ENCODE measurements at regions of chr19 and their contacts with region 1.

Region 1: GRCh38 chr19:46704379-46705076 is 12.4 kb downstream of the PRKD2 start:
- DNase-seq: peak; percentile 64
- H3K4me3 ChIP-seq: no peak overlapping the region
- H3K27ac ChIP-seq: no peak overlapping the region
- H3K4me1 ChIP-seq: no peaks in the 10 kb centered on the region
- H3K27me3 ChIP-seq: no peaks in the 10 kb centered on the region
- CTCF ChIP-seq: peak; percentile 95 to 98
- POLR2A ChIP-seq: peak; percentile 26

Region 2: DNA sequence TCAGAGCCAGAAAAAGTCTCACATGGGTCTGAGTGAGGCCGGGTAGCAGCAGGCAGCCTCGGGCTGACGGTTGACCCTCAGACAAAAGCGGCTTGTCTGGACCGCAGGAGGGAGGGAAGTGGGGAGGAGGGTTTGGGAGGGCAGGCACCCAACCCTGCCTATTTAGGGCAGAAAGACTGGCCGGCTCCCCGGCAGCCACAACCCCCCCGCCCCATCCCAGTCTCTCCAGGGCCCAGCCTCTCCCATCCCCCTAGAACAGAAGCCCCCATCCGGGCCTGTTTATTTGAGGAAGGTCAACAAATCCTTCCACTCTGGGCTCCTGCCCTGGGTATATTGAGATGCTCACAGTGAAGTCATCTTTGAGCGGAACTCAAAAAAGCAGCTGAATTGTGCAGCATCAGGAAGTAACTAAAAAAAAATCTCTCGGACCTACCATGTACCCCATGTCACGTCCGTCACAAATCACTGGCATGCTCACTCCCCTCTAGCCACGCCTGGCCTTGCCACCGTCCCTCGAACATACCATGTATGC is 49.8 kb before region 1 on chr19:
- CTCF ChIA-PET with region 1: no interaction called
- POLR2A ChIA-PET with region 1: no interaction called
- dilution Hi-C with region 1: no loop called
- intact Hi-C with region 1: no loop called
- DNase-seq: no peak
- H3K4me3 ChIP-seq: no peak overlapping the region
- H3K27ac ChIP-seq: no peak overlapping the region
- H3K4me1 ChIP-seq: no peaks in the 10 kb centered on the region
- H3K27me3 ChIP-seq: peaks cover 11 to 20% of the 10 kb centered on the region in 2 experiments
- CTCF ChIP-seq: no peak
- POLR2A ChIP-seq: no peak

Region 3: GRCh38 chr19:46717034-46717723 is 12.7 kb after region 1 on chr19 and contains the start of gene PRKD2:
- CTCF ChIA-PET with region 1: interaction called, 34 read pairs
- POLR2A ChIA-PET with region 1: interaction called, 3 read pairs
- dilution Hi-C with region 1: no loop called
- intact Hi-C with region 1: no loop called
- DNase-seq: peak; percentile 84
- H3K4me3 ChIP-seq: peak within 1 kb of the TSS; percentile 76 to 96 (median 85)
- H3K27ac ChIP-seq: peak within 1 kb of the TSS; percentile 57
- H3K4me1 ChIP-seq: peaks cover 38% of the 10 kb centered on the region
- H3K27me3 ChIP-seq: no peaks in the 10 kb centered on the region
- CTCF ChIP-seq: no peak
- POLR2A ChIP-seq: peak; percentile 68
- total RNA-seq, gene PRKD2: 94.9 and 101 TPM in 2 replicates

Region 4: GRCh38 chr19:46797881-46798280 is 93.4 kb after region 1 on chr19:
- CTCF ChIA-PET with region 1: no interaction called
- POLR2A ChIA-PET with region 1: no interaction called
- dilution Hi-C with region 1: no loop called
- intact Hi-C with region 1: no loop called
- DNase-seq: no peak
- H3K4me3 ChIP-seq: no peak overlapping the region
- H3K27ac ChIP-seq: no peak overlapping the region
- H3K4me1 ChIP-seq: no peaks in the 10 kb centered on the region
- H3K27me3 ChIP-seq: peaks cover 0 to 2% of the 10 kb centered on the region in 2 experiments
- CTCF ChIP-seq: no peak
- POLR2A ChIP-seq: no peak

Measured in endothelial cell of umbilical vein (primary cell).